ENCODE measurements at regions of chr10 and their contacts with region 1.

Region 1: GRCh38 chr10:52644373-52645186 is 128.0 kb downstream of the MBL2 start:
- DNase-seq: peak in 38 of 42 donors; percentile 24 to 91 (median 68)

Region 2: DNA sequence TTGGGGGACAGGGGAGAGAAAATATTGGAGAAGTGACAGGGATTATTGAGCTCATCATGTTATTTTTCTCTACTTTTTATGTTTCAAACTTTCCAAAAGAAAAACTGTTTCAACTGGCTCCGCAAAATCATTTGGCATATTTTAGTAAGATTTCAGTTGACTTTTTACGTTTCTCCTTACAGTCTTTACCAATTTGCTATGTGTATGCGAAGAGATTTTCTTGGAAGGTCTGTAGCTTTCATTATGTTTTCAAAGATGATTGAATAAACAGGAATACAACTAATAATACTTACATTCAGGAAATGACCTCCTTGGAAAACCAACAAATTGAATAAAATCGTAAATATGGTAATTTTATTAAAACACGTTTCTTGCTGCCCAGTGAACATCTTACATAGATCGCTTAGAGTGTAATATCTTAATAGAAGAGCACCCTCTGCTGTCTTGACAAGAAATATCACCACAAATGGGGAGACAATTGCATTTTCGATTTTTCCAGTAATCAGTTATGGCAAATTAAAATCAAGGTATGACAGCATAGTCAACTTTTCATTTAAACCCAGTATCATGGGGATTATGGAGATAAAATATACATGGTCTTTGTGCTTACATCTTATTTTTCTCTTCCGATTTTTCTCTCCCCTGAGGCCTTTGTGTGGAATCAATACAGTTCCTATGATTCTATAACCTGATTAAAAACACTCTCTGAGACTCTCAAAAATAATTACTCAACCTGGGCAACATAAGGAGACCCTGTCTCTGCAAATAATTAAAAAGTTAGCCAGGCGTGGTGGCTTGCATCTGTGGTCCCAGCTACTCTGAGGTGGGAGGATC is 84.9 kb after region 1 on chr10:
- intact Hi-C with region 1: loop called (anchors 5 kb)
- DNase-seq: peak in 1 of 42 donors; percentile 30

Region 3: DNA sequence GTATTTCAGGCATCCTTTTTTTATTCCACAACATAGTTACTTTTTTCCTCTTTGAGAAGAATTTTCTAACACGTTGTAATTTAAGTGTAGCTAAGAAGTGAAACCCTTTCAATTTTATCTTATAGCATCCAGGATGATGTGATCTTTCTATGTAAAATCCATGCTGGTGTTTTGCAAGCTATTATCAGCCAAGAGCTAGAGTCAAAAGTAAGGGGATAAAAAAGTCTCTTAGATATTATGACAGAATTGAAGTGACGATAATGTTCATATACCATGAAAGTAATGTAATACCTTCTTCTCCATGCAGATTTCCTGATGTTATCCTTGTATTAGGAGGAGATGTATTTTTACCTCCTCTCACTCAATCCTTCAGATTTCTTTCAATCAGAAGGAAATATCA is 192.2 kb after region 1 on chr10:
- intact Hi-C with region 1: no loop called
- DNase-seq: no peak

Measured in head of caudate nucleus (tissue), 42 donors.